Activated CD4-positive, alpha-beta memory T cell treated with anti-CD3 and anti-CD28 coated beads for 36 hours (primary cell): ENCODE measurements at regions of chr3 and their contacts with region 1.

Region 1: DNA sequence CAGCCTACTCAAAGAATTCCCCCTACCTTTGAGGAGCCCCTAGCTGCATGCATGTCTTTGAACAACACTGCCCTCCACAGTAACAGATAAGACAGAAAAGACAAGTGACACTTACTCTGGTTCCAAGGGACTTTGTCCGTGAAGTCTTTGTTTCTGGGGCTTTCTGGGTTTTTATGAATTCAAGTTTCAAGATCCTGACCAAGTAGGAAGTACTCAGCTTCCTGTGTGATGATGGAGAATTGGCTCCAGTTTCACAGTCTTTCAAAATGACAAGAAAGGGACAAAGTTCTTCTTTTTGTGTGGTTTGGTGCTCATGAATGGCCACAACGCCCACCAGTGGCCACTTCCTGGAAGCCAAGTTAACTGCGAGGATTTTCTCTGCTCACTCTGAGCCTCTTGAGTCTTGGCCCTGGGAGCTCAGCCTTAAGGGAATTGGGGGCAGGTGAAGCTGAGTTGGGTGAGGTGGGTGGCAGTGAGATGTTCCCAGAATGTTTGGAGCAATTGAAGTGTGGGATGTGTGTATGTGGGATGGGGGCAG is at the start of gene CCR1:
- DNase-seq: peak; percentile 81
- H3K4me3 Mint-ChIP-seq: no peak within 1 kb of the TSS
- H3K27ac Mint-ChIP-seq: peak within 1 kb of the TSS; percentile 64
- H3K4me1 Mint-ChIP-seq: peaks cover 17% of the 10 kb centered on the region
- H3K27me3 Mint-ChIP-seq: peaks cover 1% of the 10 kb centered on the region
- total RNA-seq, gene CCR1: 0.80 to 1.3 TPM

Region 2: GRCh38 chr3:46098319-46098761 is 109.9 kb before region 1 on chr3:
- CTCF ChIA-PET with region 1: interaction called, 4 read pairs
- POLR2A ChIA-PET with region 1: interaction called, 5 read pairs
- intact Hi-C with region 1: loop called (anchors 2 kb)
- DNase-seq: peak; percentile 76
- H3K4me3 Mint-ChIP-seq: peak overlapping the region; percentile 36
- H3K27ac Mint-ChIP-seq: peak overlapping the region; percentile 85
- H3K4me1 Mint-ChIP-seq: peaks cover 42% of the 10 kb centered on the region
- H3K27me3 Mint-ChIP-seq: peaks cover 30% of the 10 kb centered on the region

Region 3: GRCh38 chr3:46266598-46266997 is 58.4 kb after region 1 on chr3:
- CTCF ChIA-PET with region 1: no interaction called
- POLR2A ChIA-PET with region 1: no interaction called
- intact Hi-C with region 1: loop called (anchors 5 kb)
- DNase-seq: no peak
- H3K4me3 Mint-ChIP-seq: no peak overlapping the region
- H3K27ac Mint-ChIP-seq: no peak overlapping the region
- H3K4me1 Mint-ChIP-seq: peaks cover 27% of the 10 kb centered on the region
- H3K27me3 Mint-ChIP-seq: peaks cover 18% of the 10 kb centered on the region

Region 4: DNA sequence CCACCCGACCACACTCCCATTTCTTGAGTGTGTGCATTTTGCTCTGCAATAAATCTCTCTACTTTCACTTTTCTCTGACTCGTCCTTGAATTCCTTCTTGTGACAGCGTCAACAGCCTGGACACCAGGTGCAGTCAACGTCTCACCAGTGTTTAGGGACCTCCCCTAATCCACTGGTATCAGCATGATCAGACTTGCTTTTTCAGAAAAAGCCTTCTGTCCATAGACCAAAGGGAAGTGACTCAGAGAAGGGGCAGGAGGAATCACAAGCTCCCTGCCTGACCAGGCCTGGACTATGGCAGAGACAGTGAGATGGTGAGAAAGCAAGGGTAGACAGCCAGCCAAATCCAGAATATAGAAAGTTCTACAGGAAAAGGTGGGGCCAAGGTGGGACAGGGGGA is 178.0 kb after region 1 on chr3:
- CTCF ChIA-PET with region 1: no interaction called
- POLR2A ChIA-PET with region 1: no interaction called
- intact Hi-C with region 1: no loop called
- DNase-seq: no peak
- H3K4me3 Mint-ChIP-seq: no peak overlapping the region
- H3K27ac Mint-ChIP-seq: no peak overlapping the region
- H3K4me1 Mint-ChIP-seq: peaks cover 8% of the 10 kb centered on the region
- H3K27me3 Mint-ChIP-seq: peaks cover 5% of the 10 kb centered on the region